ENCODE measurements at regions of chr15 and their contacts with region 1.

Region 1: GRCh38 chr15:81296673-81297072 is 27.3 kb downstream of the STARD5 start:
- DNase-seq: peak; percentile 76
- H3K4me3 Mint-ChIP-seq: peak overlapping the region; percentile 96
- H3K27ac Mint-ChIP-seq: peak overlapping the region; percentile 93
- H3K4me1 Mint-ChIP-seq: peaks cover 90% of the 10 kb centered on the region
- H3K27me3 Mint-ChIP-seq: no peaks in the 10 kb centered on the region

Region 2: DNA sequence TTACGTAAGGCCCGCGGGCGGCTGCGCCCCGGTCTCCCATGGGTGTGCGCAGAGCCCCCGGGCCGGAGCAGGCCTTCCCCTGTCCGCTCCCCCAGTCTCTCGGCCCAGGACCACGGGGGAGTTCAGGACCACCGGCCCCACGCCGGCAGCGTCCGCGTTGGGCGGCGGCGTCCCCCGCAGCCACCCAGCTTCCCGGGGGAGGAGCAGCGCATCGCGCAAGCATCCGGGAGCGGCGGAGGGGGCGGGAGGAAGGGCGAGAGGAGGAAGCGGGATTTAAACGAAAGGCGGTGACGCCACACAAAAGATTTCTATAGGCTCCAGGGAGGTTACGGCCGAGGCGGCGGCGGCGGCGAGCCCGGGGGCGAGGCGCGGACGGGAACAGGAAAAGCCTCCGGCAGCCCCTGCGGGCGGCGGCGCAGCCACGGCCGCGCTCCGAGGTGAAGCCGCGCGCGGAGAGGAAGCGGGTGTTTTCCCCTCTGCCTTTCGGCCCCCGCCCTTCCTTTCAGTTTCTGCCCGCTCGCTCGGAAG is 296.0 kb before region 1 on chr15 and contains the start of gene TLNRD1:
- intact Hi-C with region 1: loop called (anchors 2 kb)
- DNase-seq: peak; percentile 89
- H3K4me3 Mint-ChIP-seq: peak within 1 kb of the TSS; percentile 93
- H3K27ac Mint-ChIP-seq: peak within 1 kb of the TSS; percentile 95
- H3K4me1 Mint-ChIP-seq: peaks cover 45% of the 10 kb centered on the region
- H3K27me3 Mint-ChIP-seq: no peaks in the 10 kb centered on the region
- total RNA-seq, gene TLNRD1: 18.5 and 19.1 TPM in 2 replicates

Region 3: GRCh38 chr15:81274931-81275707 is 21.6 kb before region 1 on chr15:
- intact Hi-C with region 1: loop called (anchors 1 kb)
- DNase-seq: peak; percentile 74
- H3K4me3 Mint-ChIP-seq: no peak overlapping the region
- H3K27ac Mint-ChIP-seq: peak overlapping the region; percentile 3
- H3K4me1 Mint-ChIP-seq: peaks cover 20% of the 10 kb centered on the region
- H3K27me3 Mint-ChIP-seq: no peaks in the 10 kb centered on the region

Region 4: GRCh38 chr15:81323944-81324881 is 27.5 kb after region 1 on chr15 and contains the start of gene STARD5:
- intact Hi-C with region 1: loop called (anchors 1 kb)
- DNase-seq: peak; percentile 95
- H3K4me3 Mint-ChIP-seq: peak within 1 kb of the TSS; percentile 95
- H3K27ac Mint-ChIP-seq: peak within 1 kb of the TSS; percentile 75
- H3K4me1 Mint-ChIP-seq: peaks cover 20% of the 10 kb centered on the region
- H3K27me3 Mint-ChIP-seq: no peaks in the 10 kb centered on the region
- total RNA-seq, gene STARD5: 3.3 and 4.5 TPM in 2 replicates

Region 5: GRCh38 chr15:81373775-81374395 is 77.2 kb after region 1 on chr15 and contains the start of gene TMC3:
- intact Hi-C with region 1: no loop called
- DNase-seq: no peak
- H3K4me3 Mint-ChIP-seq: no peak within 1 kb of the TSS
- H3K27ac Mint-ChIP-seq: no peak within 1 kb of the TSS
- H3K4me1 Mint-ChIP-seq: no peaks in the 10 kb centered on the region
- H3K27me3 Mint-ChIP-seq: peaks cover 11% of the 10 kb centered on the region
- total RNA-seq, gene TMC3: not detected in 2 replicates

Region 6: GRCh38 chr15:82046666-82047452 is 750.2 kb after region 1 on chr15:
- intact Hi-C with region 1: loop called (anchors 5 kb)
- DNase-seq: peak; percentile 86
- H3K4me3 Mint-ChIP-seq: peak overlapping the region; percentile 89
- H3K27ac Mint-ChIP-seq: peak overlapping the region; percentile 89
- H3K4me1 Mint-ChIP-seq: peaks cover 7% of the 10 kb centered on the region
- H3K27me3 Mint-ChIP-seq: peaks cover 42% of the 10 kb centered on the region

Measured in activated T-helper 2 cell treated with anti-CD3 and anti-CD28 coated beads, Interferon-gamma antibody, Interleukin-2, Interleukin-4, amounts not matched to agents 10 μg/mL and 5 μg/mL and 100 μg/mL, durations not matched to agents 14 hours and 24 hours and 36 hours (primary cell).